Activated CD8-positive, alpha-beta T cell treated with anti-CD3 and anti-CD28 coated beads, Interleukin-2, amount 10 ng/mL, durations not matched to agents 7 days and 5 days (primary cell): ENCODE measurements at regions of chr10 and their contacts with region 1.

Region 1: GRCh38 chr10:6920072-6921019 is 340.3 kb upstream of the PRKCQ start:
- DNase-seq: peak; percentile 88
- ATAC-seq: peak; percentile 99
- H3K4me3 Mint-ChIP-seq: no peak overlapping the region
- H3K27ac Mint-ChIP-seq: no peak overlapping the region
- H3K4me1 Mint-ChIP-seq: peaks cover 34% of the 10 kb centered on the region
- H3K27me3 Mint-ChIP-seq: peaks cover 4% of the 10 kb centered on the region

Region 2: DNA sequence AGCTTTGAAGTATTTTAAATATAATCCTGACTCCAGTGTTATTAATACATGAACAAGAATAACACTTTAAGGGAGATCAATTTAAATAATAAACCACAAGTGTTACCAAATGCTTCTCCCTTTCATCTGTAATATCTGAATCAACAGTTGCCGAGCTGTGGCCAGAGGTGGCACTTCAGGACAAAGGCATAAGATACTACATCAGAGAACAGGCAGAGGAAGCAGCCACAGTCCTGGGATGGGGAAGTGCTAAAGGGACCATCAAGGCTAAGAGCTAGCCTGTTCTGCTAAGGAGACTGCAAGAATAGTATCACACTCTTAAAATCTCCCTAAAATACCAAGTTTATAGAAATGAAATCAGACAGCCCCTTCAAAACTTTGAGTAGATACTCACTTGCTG is 37.9 kb after region 1 on chr10:
- CTCF ChIA-PET with region 1: interaction called, 24 read pairs
- POLR2A ChIA-PET with region 1: no interaction called
- DNase-seq: no peak
- ATAC-seq: peak; percentile 62
- H3K4me3 Mint-ChIP-seq: no peak overlapping the region
- H3K27ac Mint-ChIP-seq: peak overlapping the region; percentile 43
- H3K4me1 Mint-ChIP-seq: peaks cover 23% of the 10 kb centered on the region
- H3K27me3 Mint-ChIP-seq: peaks cover 10% of the 10 kb centered on the region

Region 3: GRCh38 chr10:7082967-7083366 is 162.6 kb after region 1 on chr10:
- CTCF ChIA-PET with region 1: interaction called, 16 read pairs
- POLR2A ChIA-PET with region 1: no interaction called
- DNase-seq: no peak
- ATAC-seq: no peak
- H3K4me3 Mint-ChIP-seq: no peak overlapping the region
- H3K27ac Mint-ChIP-seq: no peak overlapping the region
- H3K4me1 Mint-ChIP-seq: no peaks in the 10 kb centered on the region
- H3K27me3 Mint-ChIP-seq: peaks cover 50% of the 10 kb centered on the region

Region 4: GRCh38 chr10:7146189-7146588 is 225.8 kb after region 1 on chr10:
- CTCF ChIA-PET with region 1: interaction called, 10 read pairs
- POLR2A ChIA-PET with region 1: no interaction called
- DNase-seq: no peak
- ATAC-seq: no peak
- H3K4me3 Mint-ChIP-seq: no peak overlapping the region
- H3K27ac Mint-ChIP-seq: no peak overlapping the region
- H3K4me1 Mint-ChIP-seq: no peaks in the 10 kb centered on the region
- H3K27me3 Mint-ChIP-seq: peaks cover 23% of the 10 kb centered on the region

Region 5: GRCh38 chr10:7410862-7411670 is 490.7 kb after region 1 on chr10 and contains the start of gene SFMBT2:
- CTCF ChIA-PET with region 1: interaction called, 63 read pairs
- POLR2A ChIA-PET with region 1: interaction called, 4 read pairs
- DNase-seq: peak; percentile 76
- ATAC-seq: peak; percentile 55
- H3K4me3 Mint-ChIP-seq: peak within 1 kb of the TSS; percentile 98
- H3K27ac Mint-ChIP-seq: peak within 1 kb of the TSS; percentile 98
- H3K4me1 Mint-ChIP-seq: peaks cover 48% of the 10 kb centered on the region
- H3K27me3 Mint-ChIP-seq: peaks cover 16% of the 10 kb centered on the region
- total RNA-seq, gene SFMBT2: 63.1 to 63.2 TPM

Region 6: DNA sequence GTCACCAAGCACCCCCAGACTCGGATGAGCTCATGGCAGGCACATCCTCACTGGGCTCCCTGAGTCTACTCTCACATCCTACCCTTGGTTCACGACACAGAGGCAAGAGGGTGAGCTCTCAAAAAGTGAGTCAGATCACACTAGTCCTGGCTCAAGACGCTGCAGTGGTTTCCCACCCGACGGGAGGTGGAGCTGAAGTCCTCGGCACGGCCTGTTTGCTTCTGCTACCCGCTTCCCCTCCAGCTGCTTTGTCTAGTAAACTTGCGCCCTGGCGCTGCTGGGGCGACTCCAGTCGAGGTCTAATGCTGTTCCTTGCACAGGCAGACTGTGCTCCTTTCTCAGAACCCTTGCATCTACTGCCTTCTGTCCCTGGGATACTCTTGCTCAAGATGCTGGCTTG is 504.0 kb after region 1 on chr10:
- CTCF ChIA-PET with region 1: interaction called, 57 read pairs
- POLR2A ChIA-PET with region 1: no interaction called
- DNase-seq: peak; percentile 72
- ATAC-seq: peak; percentile 87
- H3K4me3 Mint-ChIP-seq: no peak overlapping the region
- H3K27ac Mint-ChIP-seq: peak overlapping the region; percentile 25
- H3K4me1 Mint-ChIP-seq: peaks cover 34% of the 10 kb centered on the region
- H3K27me3 Mint-ChIP-seq: peaks cover 4% of the 10 kb centered on the region